ENCODE measurements at regions of chr3 and their contacts with region 1.

Region 1: DNA sequence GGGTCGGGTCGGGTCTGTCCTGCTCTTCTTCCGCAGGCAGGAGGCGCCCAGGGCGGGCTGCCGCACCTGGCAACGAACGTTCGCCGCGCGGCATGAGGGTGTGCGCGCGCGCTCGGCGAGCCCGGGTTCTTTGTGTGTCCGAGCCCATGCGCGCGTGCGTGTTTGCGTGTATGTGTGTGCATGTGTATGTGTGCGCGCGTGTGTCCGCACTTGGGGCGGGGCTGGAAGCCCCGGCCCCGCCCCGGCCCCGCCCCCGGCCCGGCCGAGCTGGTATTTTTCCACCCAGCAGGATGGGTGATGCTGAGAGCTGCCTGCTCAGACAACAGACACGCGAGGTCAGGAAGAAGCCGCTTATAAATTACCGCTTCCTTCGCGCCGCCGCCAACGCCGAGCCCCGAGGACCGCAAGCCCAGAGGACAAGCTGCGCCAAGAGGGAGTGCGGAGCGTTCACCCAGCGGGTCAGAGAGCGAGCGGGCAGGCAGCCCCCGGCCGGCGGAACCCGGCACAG is at the start of gene SLC6A6:
- DNase-seq: peak; percentile 99
- H3K4me3 ChIP-seq: peak within 1 kb of the TSS; percentile 60 to 79 (median 74)
- H3K27ac ChIP-seq: peak within 1 kb of the TSS; percentile 88 to 89 (median 89)
- H3K4me1 ChIP-seq: peaks cover 32 to 53% (median 51%) of the 10 kb centered on the region in 4 donors
- H3K27me3 ChIP-seq: no peaks in the 10 kb centered on the region
- CTCF ChIP-seq: peak; percentile 49 to 59 (median 53)
- EP300 ChIP-seq: no peak
- POLR2A ChIP-seq: no peak
- total RNA-seq, gene SLC6A6: 15.0 to 36.2 (median 23.7) TPM

Region 2: DNA sequence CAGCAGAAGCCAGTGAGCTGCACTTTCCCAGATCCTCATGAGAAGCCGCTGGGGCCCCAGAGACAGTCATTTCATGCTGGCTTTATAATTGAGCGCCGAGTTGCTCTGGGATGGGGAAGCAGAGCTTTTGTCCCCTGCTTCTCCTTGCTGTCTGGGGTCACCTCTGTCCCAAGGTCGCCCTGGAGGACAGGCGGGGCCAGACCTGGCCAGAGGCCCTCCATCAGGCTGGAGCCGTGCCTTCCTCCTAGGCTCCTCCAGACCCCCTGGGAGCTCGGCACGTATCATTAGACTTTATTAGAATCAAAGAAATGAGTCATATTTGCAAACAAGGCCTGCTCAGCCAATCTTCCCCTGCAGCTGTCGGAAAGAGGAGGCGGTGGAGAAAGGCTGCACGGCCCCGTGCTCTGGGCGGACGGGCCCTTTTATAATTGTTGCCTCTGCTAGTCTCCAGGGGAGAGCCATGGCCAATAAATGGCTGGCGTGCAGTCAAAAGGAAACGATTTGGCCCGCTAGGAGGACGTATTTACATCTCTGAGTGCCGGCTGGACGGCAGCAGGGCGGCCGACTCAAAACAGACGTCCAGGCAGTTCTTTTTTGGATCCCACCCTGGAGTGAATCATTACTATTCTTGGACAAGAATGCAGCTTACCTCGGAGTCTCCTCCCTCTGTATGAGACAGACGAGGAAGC is 50.5 kb after region 1 on chr3:
- intact Hi-C with region 1: loop called (anchors 5 kb)
- DNase-seq: peak; percentile 97
- H3K4me3 ChIP-seq: peak overlapping the region in 1 of 4 donors; percentile 27
- H3K27ac ChIP-seq: peak overlapping the region; percentile 83 to 93 (median 85)
- H3K4me1 ChIP-seq: peaks cover 33 to 61% (median 51%) of the 10 kb centered on the region in 4 donors
- H3K27me3 ChIP-seq: no peaks in the 10 kb centered on the region
- CTCF ChIP-seq: peak in 1 of 3 experiments; percentile 30
- EP300 ChIP-seq: no peak
- POLR2A ChIP-seq: no peak

Region 3: GRCh38 chr3:14467814-14468620 is 65.7 kb after region 1 on chr3:
- intact Hi-C with region 1: loop called (anchors 5 kb)
- DNase-seq: no peak
- H3K4me3 ChIP-seq: no peak overlapping the region
- H3K27ac ChIP-seq: no peak overlapping the region
- H3K4me1 ChIP-seq: peaks cover 0 to 8% (median 5%) of the 10 kb centered on the region in 4 donors
- H3K27me3 ChIP-seq: no peaks in the 10 kb centered on the region
- CTCF ChIP-seq: peak; percentile 86 to 95 (median 92)
- EP300 ChIP-seq: no peak
- POLR2A ChIP-seq: no peak

Measured in esophagus muscularis mucosa (tissue), 4 donors.